Right ventricle myocardium superior (tissue), 1 donor: ENCODE measurements at regions of chr1 and their contacts with region 1.

Region 1: DNA sequence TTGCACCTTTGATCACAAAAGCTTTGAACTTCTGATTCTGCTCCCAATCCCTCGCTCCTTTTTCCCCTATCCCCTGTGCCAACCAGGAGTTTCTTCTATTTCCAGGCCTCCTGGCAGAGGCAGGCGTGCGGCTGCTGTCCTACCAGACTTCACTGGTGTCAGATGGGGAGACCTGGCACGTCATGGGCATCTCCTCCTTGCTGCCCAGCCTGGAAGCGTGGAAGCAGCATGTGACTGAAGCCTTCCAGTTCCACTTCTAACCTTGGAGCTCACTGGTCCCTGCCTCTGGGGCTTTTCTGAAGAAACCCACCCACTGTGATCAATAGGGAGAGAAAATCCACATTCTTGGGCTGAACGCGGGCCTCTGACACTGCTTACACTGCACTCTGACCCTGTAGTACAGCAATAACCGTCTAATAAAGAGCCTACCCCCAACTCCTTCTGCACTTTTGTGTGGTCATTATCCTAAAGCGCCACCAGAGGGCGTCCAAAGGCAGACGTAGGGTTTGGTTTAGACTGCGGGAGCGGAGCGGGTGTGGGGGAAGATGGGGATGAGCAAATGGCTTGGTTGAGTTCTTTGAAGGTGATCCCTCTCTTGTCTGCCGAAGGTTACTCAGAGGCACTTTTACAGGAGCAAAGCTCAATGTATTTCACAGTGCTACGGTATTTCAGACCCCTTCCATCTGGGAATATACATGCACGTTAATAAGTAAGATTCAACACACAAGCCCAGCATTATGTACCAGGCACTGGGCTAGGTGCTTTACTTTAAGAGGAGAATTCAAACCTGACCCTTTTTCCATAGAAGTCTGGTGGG is 24.7 kb downstream of the HMGCS2 start:
- DNase-seq: peak; percentile 68
- ATAC-seq: peak; percentile 68

Region 2: DNA sequence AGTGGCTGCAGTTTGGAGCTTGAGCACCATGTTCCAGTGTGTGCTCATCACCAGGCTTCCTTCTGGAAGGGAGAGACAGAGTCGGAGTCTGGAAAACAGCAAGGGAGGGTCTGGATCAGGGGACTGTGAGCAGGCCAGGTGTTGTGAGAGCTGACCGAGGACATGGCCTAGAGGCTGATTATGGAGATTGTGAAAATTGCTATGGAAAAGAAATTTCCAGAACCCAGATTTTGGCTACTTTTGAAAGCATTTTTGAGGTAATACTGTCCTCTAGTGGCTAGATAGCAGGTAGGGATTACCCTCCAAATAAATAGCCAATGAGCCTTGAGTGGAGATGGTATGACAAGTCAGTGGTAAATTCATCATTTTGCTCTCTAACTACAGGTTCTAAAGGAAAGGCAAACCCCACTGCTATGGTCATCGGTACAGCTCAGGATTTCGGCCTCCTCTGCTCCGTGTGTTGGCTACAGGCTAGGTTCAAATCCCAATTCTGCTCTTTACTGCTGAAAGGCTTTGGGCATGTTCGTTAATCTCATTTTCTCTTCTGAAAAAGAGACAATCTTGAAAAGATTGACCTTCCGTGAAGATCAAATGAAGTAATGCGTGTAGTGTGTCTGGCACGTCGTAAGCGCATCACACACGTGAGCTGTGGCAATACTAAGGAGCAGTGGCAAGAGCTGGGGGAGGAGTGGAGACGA is 376.4 kb before region 1 on chr1:
- intact Hi-C with region 1: no loop called
- DNase-seq: no peak
- ATAC-seq: peak; percentile 56

Region 3: GRCh38 chr1:119808972-119809550 is 65.1 kb after region 1 on chr1:
- intact Hi-C with region 1: loop called (anchors 5 kb)
- DNase-seq: peak; percentile 78
- ATAC-seq: peak; percentile 93